Left ventricle myocardium inferior (tissue), 1 donor: ENCODE measurements at regions of chr3 and their contacts with region 1.

Region 1: GRCh38 chr3:101379658-101380376 is 59.4 kb upstream of the IMPG2 start:
- DNase-seq: no peak
- H3K4me3 ChIP-seq: no peak overlapping the region
- H3K27ac ChIP-seq: peak overlapping the region; percentile 49
- H3K4me1 ChIP-seq: peaks cover 41% of the 10 kb centered on the region
- H3K27me3 ChIP-seq: no peaks in the 10 kb centered on the region
- CTCF ChIP-seq: no peak

Region 2: DNA sequence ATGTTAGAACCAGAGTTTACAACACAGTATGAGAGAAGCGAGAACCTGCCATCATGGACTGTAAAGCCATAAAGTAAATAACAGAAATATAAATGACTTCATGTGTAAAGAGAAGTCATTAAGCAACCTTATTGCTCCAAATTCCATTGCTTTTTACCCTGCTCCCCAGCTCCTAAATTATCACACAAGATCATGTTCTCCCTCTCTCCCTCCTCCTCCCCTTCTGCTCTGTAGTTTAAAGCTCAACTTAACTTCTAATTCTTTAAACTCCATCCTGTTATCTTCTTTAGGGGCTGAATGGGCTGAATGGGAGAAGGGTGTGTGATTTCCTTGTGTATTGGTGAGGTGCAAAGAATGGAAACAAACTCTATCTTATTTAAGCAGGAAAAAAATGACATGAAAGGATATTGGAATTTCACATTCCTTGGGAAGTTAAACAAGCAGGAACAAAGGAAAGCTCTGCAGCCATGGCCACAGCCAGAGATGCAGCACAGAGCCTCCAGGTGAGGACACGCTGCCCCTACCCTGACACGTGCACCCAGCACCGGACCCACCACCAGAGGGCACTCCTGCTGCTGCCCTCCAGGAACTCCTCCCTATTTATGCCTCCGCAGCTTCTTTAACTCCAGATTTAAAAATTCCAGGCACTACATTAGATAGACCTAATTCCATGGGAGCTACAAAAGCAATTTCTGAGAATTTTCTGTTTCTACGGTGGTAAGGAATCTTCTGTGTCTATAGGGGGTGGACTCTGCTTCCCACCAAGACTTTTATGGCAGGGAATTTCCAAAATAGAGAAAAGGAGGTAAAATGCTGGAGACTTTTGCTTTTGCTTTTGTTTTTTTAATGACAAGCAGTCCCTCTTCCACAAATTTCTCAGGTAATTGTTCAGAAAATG is 309.7 kb before region 1 on chr3:
- intact Hi-C with region 1: no loop called
- DNase-seq: peak; percentile 44
- H3K4me3 ChIP-seq: no peak overlapping the region
- H3K27ac ChIP-seq: no peak overlapping the region
- H3K4me1 ChIP-seq: peaks cover 10% of the 10 kb centered on the region
- H3K27me3 ChIP-seq: no peaks in the 10 kb centered on the region
- CTCF ChIP-seq: peak; percentile 79

Region 3: GRCh38 chr3:101229681-101230080 is 150.1 kb before region 1 on chr3:
- intact Hi-C with region 1: loop called (anchors 10 kb)
- DNase-seq: no peak
- H3K4me3 ChIP-seq: no peak overlapping the region
- H3K27ac ChIP-seq: no peak overlapping the region
- H3K4me1 ChIP-seq: no peaks in the 10 kb centered on the region
- H3K27me3 ChIP-seq: no peaks in the 10 kb centered on the region
- CTCF ChIP-seq: peak; percentile 47

Region 4: DNA sequence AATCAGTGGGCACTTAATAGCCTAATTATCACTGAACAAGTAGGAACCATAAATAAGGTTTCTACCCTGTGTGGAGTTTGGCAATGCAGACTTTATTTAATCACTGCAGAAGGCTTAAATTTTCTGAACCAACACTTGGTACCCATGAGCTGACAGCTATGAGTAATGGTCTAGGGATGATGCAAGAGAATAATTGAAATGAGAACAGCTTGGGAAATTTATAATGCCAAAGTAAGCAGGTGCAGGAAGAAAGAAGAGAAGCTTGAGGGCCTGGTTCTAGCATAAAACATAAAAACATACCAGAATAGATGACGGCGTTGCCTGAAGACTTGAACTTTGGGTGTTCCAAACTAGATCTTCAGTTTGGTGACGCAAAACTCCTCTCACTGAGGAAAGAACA is 126.4 kb before region 1 on chr3:
- intact Hi-C with region 1: no loop called
- DNase-seq: no peak
- H3K4me3 ChIP-seq: no peak overlapping the region
- H3K27ac ChIP-seq: no peak overlapping the region
- H3K4me1 ChIP-seq: no peaks in the 10 kb centered on the region
- H3K27me3 ChIP-seq: no peaks in the 10 kb centered on the region
- CTCF ChIP-seq: no peak

Region 5: DNA sequence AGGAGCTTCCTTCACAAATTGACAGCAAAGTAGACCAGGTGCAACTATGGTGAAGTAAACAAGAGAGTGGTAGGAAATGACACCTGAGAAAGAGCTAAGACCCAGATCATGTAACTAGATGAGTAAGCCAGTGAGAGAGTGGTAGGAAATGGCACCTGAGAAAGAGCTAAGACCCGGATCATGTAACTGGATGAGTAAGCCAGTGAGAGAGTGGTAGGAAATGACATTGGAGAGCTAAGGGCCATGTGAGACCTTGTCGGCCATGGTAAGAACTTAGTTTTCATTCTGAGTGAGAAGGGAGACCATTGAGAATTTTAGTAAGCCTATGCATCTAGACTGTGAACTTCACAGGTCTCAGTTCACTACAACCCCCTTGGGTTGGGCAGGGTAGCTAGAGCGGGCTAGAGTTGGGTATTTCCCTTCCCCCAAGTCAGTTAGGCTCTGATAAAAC is 138.6 kb after region 1 on chr3:
- intact Hi-C with region 1: no loop called
- DNase-seq: no peak
- H3K4me3 ChIP-seq: no peak overlapping the region
- H3K27ac ChIP-seq: no peak overlapping the region
- H3K4me1 ChIP-seq: peaks cover 5% of the 10 kb centered on the region
- H3K27me3 ChIP-seq: peaks cover 25% of the 10 kb centered on the region
- CTCF ChIP-seq: no peak

Region 6: GRCh38 chr3:101827211-101828174 is 447.7 kb after region 1 on chr3:
- intact Hi-C with region 1: no loop called
- DNase-seq: peak; percentile 67
- H3K4me3 ChIP-seq: peak overlapping the region; percentile 70
- H3K27ac ChIP-seq: peak overlapping the region; percentile 92
- H3K4me1 ChIP-seq: peaks cover 41% of the 10 kb centered on the region
- H3K27me3 ChIP-seq: no peaks in the 10 kb centered on the region
- CTCF ChIP-seq: no peak